Panc1 (cell line): ENCODE measurements at regions of chr11 and their contacts with region 1.

Region 1: DNA sequence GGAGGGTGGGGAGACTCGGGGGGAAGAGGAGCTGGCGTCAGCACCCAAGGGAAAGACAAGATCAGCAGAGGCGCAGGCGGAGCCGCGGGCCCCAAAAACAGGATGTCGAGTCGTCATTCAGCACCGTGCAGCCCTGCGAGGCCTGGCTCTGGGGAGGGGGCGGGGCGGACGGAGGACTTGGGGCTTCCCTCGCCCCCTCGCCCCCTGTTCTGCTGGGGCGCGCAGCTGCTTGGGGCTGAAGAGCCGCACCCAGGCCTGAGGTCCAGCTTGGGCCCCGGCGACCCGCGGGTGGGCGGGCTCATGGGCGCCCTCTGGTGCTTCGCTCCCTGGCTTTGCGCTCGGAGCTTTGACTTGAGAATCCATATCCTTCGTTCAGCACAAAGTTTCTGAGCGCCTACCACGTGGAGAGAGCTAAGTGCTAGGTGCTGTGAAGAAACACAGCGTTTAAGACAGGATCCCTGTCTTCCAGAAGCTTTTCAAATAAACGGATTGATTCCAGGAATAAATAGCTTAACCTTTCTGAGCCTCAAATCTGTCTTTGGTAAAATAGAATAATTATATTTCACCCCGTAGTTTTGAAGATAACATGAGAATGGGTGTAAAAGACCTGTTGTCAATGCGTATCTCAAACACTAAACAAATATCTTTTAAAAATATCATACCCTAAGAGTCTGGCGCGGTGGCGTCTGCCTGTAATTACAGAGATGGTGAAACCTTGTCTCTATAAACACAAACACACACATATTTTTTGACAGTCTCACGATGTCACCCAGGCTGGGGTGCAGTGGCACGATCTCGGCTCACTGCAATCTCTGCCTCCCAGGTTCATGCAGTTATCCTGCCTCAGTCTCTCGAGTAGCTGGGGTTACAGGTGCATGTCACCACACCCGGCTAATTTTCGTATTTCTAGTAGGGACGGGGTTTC is 929 bp upstream of the RHOG start:
- DNase-seq: peak; percentile 82
- ATAC-seq: peak; percentile 84
- H3K4me3 ChIP-seq: peak overlapping the region; percentile 62 to 63
- H3K27ac ChIP-seq: peak overlapping the region; percentile 84
- H3K4me1 ChIP-seq: peaks cover 36% of the 10 kb centered on the region
- H3K27me3 ChIP-seq: no peaks in the 10 kb centered on the region
- CTCF ChIP-seq: peak; percentile 100

Region 2: GRCh38 chr11:3781423-3781822 is 60.3 kb before region 1 on chr11:
- CTCF ChIA-PET with region 1: no interaction called
- POLR2A ChIA-PET with region 1: interaction called, 19 read pairs
- in situ Hi-C with region 1: no loop called
- intact Hi-C with region 1: no loop called
- DNase-seq: no peak
- ATAC-seq: no peak
- H3K4me3 ChIP-seq: no peak overlapping the region
- H3K27ac ChIP-seq: no peak overlapping the region
- H3K4me1 ChIP-seq: peaks cover 4% of the 10 kb centered on the region; the same call in 1 of the 2 replicates
- H3K27me3 ChIP-seq: no peaks in the 10 kb centered on the region
- CTCF ChIP-seq: no peak